ENCODE measurements at regions of chr2 and their contacts with region 1.

Region 1: DNA sequence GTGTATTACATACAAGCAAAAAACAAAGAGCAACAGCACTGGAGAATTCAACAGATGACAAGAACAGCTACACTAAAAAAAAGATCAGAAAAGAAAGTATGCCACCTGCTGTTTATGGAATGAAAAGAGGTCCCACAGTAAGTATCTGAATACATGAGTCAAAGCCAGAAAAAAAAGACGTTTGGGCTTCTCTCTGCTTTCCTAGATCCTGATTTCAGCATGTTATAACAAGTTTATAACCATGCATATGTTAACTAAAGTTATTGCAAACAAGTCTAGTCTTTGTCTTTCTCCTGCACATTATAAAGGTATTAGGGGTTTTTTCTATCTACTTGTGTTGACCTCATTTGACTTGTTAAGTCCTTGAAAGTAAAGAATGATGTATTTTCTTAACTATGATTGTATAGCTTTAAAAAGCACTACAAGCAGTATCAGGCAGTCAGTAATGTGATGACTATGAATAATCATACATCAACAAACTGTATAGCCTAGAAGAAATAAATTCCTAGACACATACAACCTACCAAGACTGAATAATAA is 108.5 kb upstream of the COL5A2 start:
- DNase-seq: no peak
- H3K4me3 ChIP-seq: no peak overlapping the region
- H3K27ac ChIP-seq: no peak overlapping the region
- H3K4me1 ChIP-seq: no peaks in the 10 kb centered on the region
- H3K27me3 ChIP-seq: no peaks in the 10 kb centered on the region
- CTCF ChIP-seq: peak in 4 of 6 experiments; percentile 16 to 78 (median 59)
- POLR2A ChIP-seq: no peak

Region 2: GRCh38 chr2:189109921-189110397 is 178.1 kb before region 1 on chr2:
- intact Hi-C with region 1: loop called (anchors 10 kb)
- DNase-seq: no peak
- H3K4me3 ChIP-seq: no peak overlapping the region
- H3K27ac ChIP-seq: no peak overlapping the region
- H3K4me1 ChIP-seq: no peaks in the 10 kb centered on the region
- H3K27me3 ChIP-seq: no peaks in the 10 kb centered on the region
- CTCF ChIP-seq: no peak
- POLR2A ChIP-seq: no peak

Region 3: GRCh38 chr2:189210250-189211075 is 77.6 kb before region 1 on chr2:
- intact Hi-C with region 1: no loop called
- DNase-seq: no peak
- H3K4me3 ChIP-seq: no peak overlapping the region
- H3K27ac ChIP-seq: peak overlapping the region in 2 of 3 donors; percentile 63 to 64
- H3K4me1 ChIP-seq: peaks cover 0 to 6% of the 10 kb centered on the region in 2 donors
- H3K27me3 ChIP-seq: no peaks in the 10 kb centered on the region
- CTCF ChIP-seq: no peak
- POLR2A ChIP-seq: no peak

Region 4: DNA sequence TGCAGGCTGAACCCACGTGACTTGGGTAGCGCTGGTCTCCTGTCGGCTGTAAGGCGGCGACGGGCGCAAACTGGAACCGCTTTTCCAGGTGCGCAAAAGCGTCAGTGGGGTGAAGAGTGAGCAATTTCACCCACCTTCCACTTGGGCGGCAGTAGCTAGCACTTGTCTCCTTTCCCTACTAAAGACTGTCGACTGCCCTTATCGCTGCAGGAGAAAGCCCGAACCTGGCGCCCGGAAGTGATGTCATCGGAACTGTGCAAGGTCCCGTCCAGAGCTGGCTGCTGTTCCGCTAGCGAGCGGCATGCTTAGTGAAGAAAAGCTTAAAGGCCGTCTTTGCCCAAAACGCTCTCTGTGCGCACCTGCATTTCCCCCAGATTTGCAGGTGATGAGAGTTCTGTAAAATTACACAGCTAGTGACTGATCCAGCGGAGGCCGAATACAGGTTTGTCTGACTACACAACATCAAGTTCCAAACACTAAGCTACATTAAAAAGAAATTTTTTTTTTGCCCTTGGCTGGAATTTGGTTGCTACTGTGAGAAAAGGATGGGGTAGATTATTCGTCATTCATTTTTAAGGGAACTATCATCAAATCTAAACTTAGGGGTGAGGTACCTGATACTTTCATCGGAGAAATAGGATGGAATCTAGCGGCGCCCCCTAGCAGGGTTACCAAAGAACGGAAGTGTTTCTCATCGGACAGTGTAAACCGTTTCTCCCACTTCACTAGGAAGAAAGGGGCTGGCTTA is 474.7 kb after region 1 on chr2 and contains the start of gene OSGEPL1:
- intact Hi-C with region 1: no loop called
- DNase-seq: peak; percentile 95 to 96
- H3K4me3 ChIP-seq: peak within 1 kb of the TSS; percentile 52 to 80 (median 69)
- H3K27ac ChIP-seq: peak within 1 kb of the TSS; percentile 79 to 88 (median 88)
- H3K4me1 ChIP-seq: peaks cover 3 to 5% of the 10 kb centered on the region in 2 donors
- H3K27me3 ChIP-seq: no peaks in the 10 kb centered on the region
- CTCF ChIP-seq: peak in 4 of 6 experiments; percentile 24 to 45 (median 30)
- POLR2A ChIP-seq: peak in 1 of 2 donors; percentile 46
- total RNA-seq, gene OSGEPL1: 6.9 to 13.7 (median 9.8) TPM

Region 5: DNA sequence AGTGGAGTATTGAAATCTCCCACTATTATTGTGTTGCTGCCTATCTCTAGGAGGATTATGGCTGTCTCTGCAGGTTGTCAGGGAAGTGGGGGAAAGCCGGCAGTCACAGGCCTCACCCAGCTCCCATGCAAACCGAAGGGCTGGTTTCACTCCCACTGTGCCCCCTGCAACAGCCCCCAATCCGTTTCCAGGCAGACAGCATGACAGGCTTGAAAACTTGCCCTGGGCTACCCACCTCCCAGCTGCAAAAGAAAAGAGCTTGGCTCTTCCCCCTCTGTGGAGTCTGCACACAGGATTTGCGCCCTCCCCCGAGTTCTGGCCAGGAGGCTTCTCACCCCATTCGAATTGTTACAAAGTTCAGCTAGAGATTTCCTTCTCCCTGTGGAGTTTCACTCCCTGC is 861.9 kb after region 1 on chr2:
- intact Hi-C with region 1: no loop called
- DNase-seq: no peak
- H3K4me3 ChIP-seq: no peak overlapping the region
- H3K27ac ChIP-seq: no peak overlapping the region
- H3K4me1 ChIP-seq: no peaks in the 10 kb centered on the region
- H3K27me3 ChIP-seq: no peaks in the 10 kb centered on the region
- CTCF ChIP-seq: no peak
- POLR2A ChIP-seq: no peak